HCT116 (cell line): ENCODE measurements at regions of chr12 and their contacts with region 1.

Region 1: GRCh38 chr12:25241167-25242020 is 9.3 kb downstream of the KRAS start:
- DNase-seq: peak; percentile 18
- ATAC-seq: no peak
- H3K4me3 ChIP-seq: no peak overlapping the region
- H3K27ac ChIP-seq: no peak overlapping the region
- H3K4me1 ChIP-seq: no peaks in the 10 kb centered on the region
- H3K27me3 ChIP-seq: no peaks in the 10 kb centered on the region
- CTCF ChIP-seq: peak; percentile 39 to 72 (median 63); a peak in 5 of 6 replicates
- POLR2A ChIP-seq: no peak
- RAD21 ChIP-seq: peak; percentile 58

Region 2: GRCh38 chr12:25386831-25387731 is 145.7 kb after region 1 on chr12:
- CTCF ChIA-PET with region 1: interaction called, 5 read pairs
- POLR2A ChIA-PET with region 1: interaction called, 4 read pairs
- RAD21 ChIA-PET with region 1: interaction called, 3 to 6 read pairs
- intact Hi-C with region 1: loop called (anchors 1 kb)
- DNase-seq: peak; percentile 84
- ATAC-seq: peak; percentile 42
- H3K4me3 ChIP-seq: peak overlapping the region; percentile 76 to 79
- H3K27ac ChIP-seq: peak overlapping the region; percentile 92
- H3K4me1 ChIP-seq: peaks cover 12 to 31% of the 10 kb centered on the region in 2 experiments
- H3K27me3 ChIP-seq: no peaks in the 10 kb centered on the region
- CTCF ChIP-seq: peak; percentile 78 to 87 (median 79); a peak in 5 of 6 replicates
- POLR2A ChIP-seq: no peak
- RAD21 ChIP-seq: peak; percentile 93

Region 3: GRCh38 chr12:26135010-26135420 is 893.6 kb after region 1 on chr12:
- CTCF ChIA-PET with region 1: no interaction called
- POLR2A ChIA-PET with region 1: no interaction called
- RAD21 ChIA-PET with region 1: no interaction called
- intact Hi-C with region 1: no loop called
- DNase-seq: no peak
- ATAC-seq: no peak
- H3K4me3 ChIP-seq: no peak overlapping the region
- H3K27ac ChIP-seq: no peak overlapping the region
- H3K4me1 ChIP-seq: peaks cover 0 to 7% of the 10 kb centered on the region in 2 experiments; a peak in 1 of 4 replicates
- H3K27me3 ChIP-seq: no peaks in the 10 kb centered on the region
- CTCF ChIP-seq: no peak
- POLR2A ChIP-seq: no peak
- RAD21 ChIP-seq: no peak